HEK293 (cell line): ENCODE measurements at regions of chr16 and their contacts with region 1.

Region 1: GRCh38 chr16:2926650-2927646 is 15.2 kb downstream of the FLYWCH1 start:
- H3K4me3 ChIP-seq: no peak overlapping the region
- H3K27ac ChIP-seq: no peak overlapping the region
- H3K4me1 ChIP-seq: no peaks in the 10 kb centered on the region
- CTCF ChIP-seq: peak; percentile 96

Region 2: DNA sequence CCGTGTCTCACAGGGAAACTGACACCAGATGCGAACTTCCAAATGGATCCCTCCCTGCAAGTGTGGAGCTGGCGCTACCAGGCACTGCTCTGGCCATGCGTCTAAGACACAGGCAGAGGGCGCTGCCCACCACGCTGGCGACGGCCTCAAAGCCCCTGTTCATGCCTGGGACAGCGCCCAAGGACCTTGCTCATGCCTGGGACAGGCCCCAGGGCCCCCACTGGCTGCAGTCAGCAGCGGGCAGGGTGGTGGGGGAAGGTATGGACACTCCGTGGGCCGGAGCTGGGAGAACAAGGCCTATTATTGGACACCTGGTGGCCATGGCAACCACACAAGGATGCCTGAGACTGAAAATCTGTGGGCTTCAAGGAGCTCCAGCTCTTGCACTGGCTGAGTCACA is 88.0 kb before region 1 on chr16:
- CTCF ChIA-PET with region 1: interaction called, 23 read pairs
- POLR2A ChIA-PET with region 1: no interaction called
- H3K4me3 ChIP-seq: no peak overlapping the region
- H3K27ac ChIP-seq: no peak overlapping the region
- H3K4me1 ChIP-seq: no peaks in the 10 kb centered on the region
- CTCF ChIP-seq: peak; percentile 95

Region 3: DNA sequence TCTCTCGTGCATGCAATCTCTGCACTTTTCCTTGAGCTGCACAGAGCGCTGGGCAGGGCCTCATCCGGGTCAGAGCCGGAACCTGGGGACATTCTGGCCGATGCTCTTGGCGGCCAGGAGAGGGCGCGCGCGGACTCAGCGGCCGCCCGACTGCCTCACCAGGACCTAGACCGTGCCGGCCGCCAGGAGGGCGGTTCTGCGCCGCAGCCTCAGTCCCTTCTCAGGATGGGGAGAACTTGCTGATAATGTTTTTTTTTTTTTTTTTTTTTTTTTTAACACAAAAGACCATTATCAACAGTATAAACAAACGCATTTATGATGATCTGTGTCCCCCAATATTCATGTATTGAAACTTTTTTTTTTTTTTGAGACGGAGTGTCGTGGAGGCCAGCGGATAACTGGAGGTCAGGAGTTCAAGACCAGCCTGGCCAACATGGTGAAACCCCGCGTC is 52.0 kb before region 1 on chr16:
- CTCF ChIA-PET with region 1: interaction called, 16 read pairs
- POLR2A ChIA-PET with region 1: no interaction called
- H3K4me3 ChIP-seq: no peak overlapping the region
- H3K27ac ChIP-seq: no peak overlapping the region
- H3K4me1 ChIP-seq: no peaks in the 10 kb centered on the region; the same call in 1 of the 2 replicates
- CTCF ChIP-seq: peak; percentile 95

Region 4: DNA sequence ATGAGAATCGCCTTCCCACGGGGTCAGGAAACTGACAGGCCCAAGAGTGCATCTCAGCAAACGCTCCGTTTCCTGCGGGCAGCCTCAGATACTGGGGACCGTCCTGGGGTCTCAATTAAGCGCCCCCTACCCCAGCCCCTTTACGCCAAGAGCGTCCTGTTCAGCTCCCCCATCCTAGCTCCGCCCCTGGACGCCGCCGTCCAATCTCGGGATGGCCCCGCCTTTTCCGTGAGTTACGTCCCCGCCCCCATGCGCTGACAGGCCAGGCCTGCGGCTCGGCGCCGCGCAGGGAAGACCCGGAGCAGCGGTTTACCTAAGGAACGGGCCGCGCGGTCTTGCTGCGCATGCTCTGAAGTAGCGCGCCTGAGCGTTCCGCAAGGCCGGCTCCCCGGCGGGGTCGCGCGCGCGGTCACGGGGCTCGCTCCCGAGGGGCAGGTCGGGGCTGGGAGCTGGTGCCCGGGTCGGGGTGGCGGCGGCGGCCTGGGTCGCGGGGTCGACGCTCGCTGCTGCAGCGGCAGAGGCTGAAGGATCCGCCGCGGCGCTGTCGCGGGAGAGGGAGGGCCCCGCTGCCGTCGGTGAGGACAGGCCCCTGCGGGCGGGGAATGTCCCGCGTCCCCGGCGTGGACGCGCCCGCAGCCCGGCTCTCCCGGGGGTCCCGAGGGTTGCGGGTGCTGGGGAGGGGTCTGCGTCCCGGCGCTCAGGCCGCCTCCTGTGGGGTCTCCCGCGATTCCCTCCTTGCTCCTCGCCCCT is 15.2 kb before region 1 on chr16 and contains the start of gene FLYWCH1:
- CTCF ChIA-PET with region 1: interaction called, 20 read pairs
- POLR2A ChIA-PET with region 1: interaction called, 3 read pairs
- H3K4me3 ChIP-seq: peak within 1 kb of the TSS; percentile 58
- H3K27ac ChIP-seq: peak within 1 kb of the TSS; percentile 54; the same call in 1 of the 2 replicates
- H3K4me1 ChIP-seq: 0 out of 2 replicates have a peak, but pooled peaks cover 4% of the 10 kb centered on the region
- CTCF ChIP-seq: peak; percentile 47

Region 5: DNA sequence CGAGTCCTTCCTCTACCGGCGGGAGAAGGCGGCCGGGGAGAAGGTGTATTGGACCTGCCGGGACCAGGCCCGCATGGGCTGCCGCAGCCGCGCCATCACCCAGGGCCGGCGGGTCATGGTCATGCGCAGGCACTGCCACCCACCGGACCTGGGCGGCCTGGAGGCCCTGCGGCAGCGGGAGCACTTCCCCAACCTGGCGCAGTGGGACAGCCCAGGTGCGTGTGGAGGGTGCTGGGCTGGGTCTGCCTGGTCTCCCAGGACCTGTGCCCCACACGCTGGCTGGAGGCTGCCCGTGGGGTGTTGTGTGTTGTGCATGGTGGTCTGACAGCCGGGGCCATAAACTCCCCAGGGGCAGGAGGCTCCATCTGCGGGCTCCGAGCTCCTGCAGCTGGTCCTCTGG is 10.2 kb after region 1 on chr16:
- CTCF ChIA-PET with region 1: interaction called, 20 read pairs
- POLR2A ChIA-PET with region 1: no interaction called
- H3K4me3 ChIP-seq: no peak overlapping the region
- H3K27ac ChIP-seq: no peak overlapping the region
- H3K4me1 ChIP-seq: no peaks in the 10 kb centered on the region
- CTCF ChIP-seq: no peak

Region 6: GRCh38 chr16:2952679-2953078 is 25.7 kb after region 1 on chr16:
- CTCF ChIA-PET with region 1: interaction called, 14 read pairs
- POLR2A ChIA-PET with region 1: no interaction called
- H3K4me3 ChIP-seq: no peak overlapping the region
- H3K27ac ChIP-seq: no peak overlapping the region
- H3K4me1 ChIP-seq: no peaks in the 10 kb centered on the region
- CTCF ChIP-seq: no peak

Region 7: GRCh38 chr16:3027945-3028712 is 101.2 kb after region 1 on chr16:
- CTCF ChIA-PET with region 1: no interaction called
- POLR2A ChIA-PET with region 1: no interaction called
- H3K4me3 ChIP-seq: no peak overlapping the region
- H3K27ac ChIP-seq: no peak overlapping the region
- H3K4me1 ChIP-seq: peaks cover 7% of the 10 kb centered on the region
- CTCF ChIP-seq: peak; percentile 90